AG04449 (cell line): ENCODE measurements at regions of chr4 and their contacts with region 1.

Region 1: GRCh38 chr4:163679189-163679588 is 184.7 kb downstream of the TMA16 start:
- DNase-seq: no peak
- H3K4me3 ChIP-seq: no peak overlapping the region
- CTCF ChIP-seq: peak; percentile 8

Region 2: DNA sequence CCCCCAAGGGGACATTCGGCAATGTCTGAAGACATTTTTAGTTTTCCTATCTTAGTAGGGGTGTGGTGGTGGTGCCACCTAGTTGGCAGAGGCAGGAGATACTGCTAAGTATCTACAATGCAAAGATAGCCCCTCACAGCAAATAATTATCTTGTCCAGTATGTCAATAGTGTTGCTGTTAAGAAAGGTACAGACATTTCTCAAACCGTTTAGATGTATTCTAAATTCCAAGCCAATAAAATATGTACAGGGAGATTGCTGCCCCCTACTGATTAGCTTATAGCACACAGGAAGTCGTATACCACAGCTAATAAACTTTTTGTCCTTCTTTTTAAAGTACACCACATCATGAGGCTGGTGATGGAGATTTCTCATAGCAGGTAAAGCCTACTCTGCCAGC is 75.8 kb after region 1 on chr4:
- CTCF ChIA-PET with region 1: interaction called, 26 read pairs
- POLR2A ChIA-PET with region 1: no interaction called
- DNase-seq: no peak
- H3K4me3 ChIP-seq: no peak overlapping the region
- CTCF ChIP-seq: no peak